ENCODE measurements at regions of chr7 and their contacts with region 1.

Region 1: DNA sequence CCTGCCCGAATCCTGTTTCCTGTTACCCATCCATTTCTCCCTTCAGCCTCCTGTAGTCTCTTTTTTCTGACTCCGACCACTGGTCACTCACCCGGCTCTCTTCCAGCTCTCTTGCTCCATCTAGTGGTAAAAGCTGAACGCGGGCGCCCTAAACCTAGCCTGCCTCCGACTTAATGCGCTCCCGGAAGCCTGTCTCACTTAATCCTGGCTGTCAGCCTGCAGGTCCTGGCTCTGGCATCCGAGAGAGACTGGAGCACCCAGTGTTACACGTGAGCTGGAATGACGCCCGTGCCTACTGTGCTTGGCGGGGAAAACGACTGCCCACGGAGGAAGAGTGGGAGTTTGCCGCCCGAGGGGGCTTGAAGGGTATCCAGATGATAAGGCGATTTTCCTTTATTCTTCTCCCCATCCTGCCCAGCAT is 10.3 kb downstream of the SUMF2 start:
- DNase-seq: peak; percentile 69
- H3K4me3 Mint-ChIP-seq: no peak overlapping the region
- H3K27ac Mint-ChIP-seq: no peak overlapping the region
- H3K4me1 Mint-ChIP-seq: peaks cover 6% of the 10 kb centered on the region
- H3K27me3 Mint-ChIP-seq: no peaks in the 10 kb centered on the region

Region 2: DNA sequence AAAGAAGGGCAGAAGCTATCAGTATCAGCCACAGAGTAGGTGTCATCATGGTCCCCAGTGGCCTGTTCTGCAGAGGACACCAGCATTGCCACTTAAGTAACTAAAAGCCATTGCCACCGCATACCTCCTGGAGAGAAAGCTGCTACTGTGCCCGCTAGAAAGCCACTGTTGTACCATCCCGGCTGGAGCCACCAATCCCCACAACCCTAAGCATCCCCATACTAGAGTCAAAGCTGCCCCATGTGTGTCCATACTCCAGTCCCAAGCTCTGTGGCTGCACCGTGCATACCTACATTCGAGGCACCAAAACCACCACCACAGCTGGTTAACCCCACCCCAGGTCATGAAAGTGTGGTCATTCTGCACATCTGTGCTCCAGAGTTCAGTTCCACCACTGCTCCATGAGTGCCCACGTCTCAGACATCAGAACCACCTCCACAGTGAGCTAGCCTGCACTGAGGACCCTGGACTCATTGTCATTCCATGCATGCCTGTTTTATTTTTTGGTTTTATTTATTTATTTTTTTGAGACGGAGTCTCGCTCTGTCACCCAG is 202.4 kb before region 1 on chr7:
- CTCF ChIA-PET with region 1: no interaction called
- POLR2A ChIA-PET with region 1: no interaction called
- DNase-seq: no peak
- H3K4me3 Mint-ChIP-seq: no peak overlapping the region
- H3K27ac Mint-ChIP-seq: no peak overlapping the region
- H3K4me1 Mint-ChIP-seq: no peaks in the 10 kb centered on the region
- H3K27me3 Mint-ChIP-seq: no peaks in the 10 kb centered on the region

Region 3: DNA sequence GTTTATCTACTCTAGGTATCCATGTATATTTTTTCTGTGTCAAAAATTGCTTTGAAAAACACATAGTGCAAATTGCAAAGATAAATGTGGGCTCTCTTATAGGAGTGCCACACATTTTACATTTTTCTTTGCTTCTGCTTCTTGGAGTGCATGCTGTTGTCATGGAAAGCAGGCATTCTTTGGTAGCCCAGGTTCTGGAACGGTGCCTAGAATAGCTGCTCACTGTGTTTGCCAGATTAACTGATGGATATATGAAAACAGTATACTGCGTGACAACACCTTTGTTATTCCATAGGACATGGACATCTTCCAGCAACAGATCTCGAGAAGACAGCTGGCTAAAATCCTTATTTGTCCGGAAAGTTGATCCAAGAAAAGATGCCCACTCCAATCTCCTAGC is 96.5 kb before region 1 on chr7:
- CTCF ChIA-PET with region 1: no interaction called
- POLR2A ChIA-PET with region 1: no interaction called
- DNase-seq: no peak
- H3K4me3 Mint-ChIP-seq: no peak overlapping the region
- H3K27ac Mint-ChIP-seq: no peak overlapping the region
- H3K4me1 Mint-ChIP-seq: no peaks in the 10 kb centered on the region
- H3K27me3 Mint-ChIP-seq: no peaks in the 10 kb centered on the region

Region 4: DNA sequence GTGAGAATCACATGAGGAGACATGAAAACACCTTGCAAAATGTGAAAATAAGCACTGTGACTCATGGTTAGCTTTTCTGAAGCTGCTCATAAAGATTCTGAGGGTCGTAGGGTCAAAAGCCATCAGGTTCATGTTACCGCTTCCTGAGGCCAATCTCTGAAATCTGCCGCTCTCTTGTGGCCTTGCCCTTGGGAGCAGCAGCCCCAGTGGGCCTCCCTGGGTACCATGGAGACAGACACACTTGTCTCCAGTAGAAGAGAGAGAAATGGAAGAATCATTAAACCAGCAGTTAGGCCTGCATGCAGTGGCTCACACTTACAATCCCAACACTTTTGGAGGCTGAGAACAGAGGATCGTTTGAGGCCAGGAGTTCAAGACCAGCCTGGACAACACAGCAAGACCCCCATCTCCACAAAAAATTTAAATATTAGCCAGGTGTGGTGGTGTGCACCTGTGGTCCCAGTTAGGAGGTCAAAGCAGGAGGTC is 67.2 kb before region 1 on chr7:
- CTCF ChIA-PET with region 1: interaction called, 13 read pairs
- POLR2A ChIA-PET with region 1: no interaction called
- DNase-seq: no peak
- H3K4me3 Mint-ChIP-seq: no peak overlapping the region
- H3K27ac Mint-ChIP-seq: peak overlapping the region; percentile 52
- H3K4me1 Mint-ChIP-seq: no peaks in the 10 kb centered on the region
- H3K27me3 Mint-ChIP-seq: no peaks in the 10 kb centered on the region

Region 5: GRCh38 chr7:56053379-56053778 is 21.0 kb before region 1 on chr7:
- CTCF ChIA-PET with region 1: interaction called, 10 read pairs
- POLR2A ChIA-PET with region 1: no interaction called
- DNase-seq: no peak
- H3K4me3 Mint-ChIP-seq: peak overlapping the region; percentile 98
- H3K27ac Mint-ChIP-seq: no peak overlapping the region
- H3K4me1 Mint-ChIP-seq: peaks cover 49% of the 10 kb centered on the region
- H3K27me3 Mint-ChIP-seq: no peaks in the 10 kb centered on the region